ENCODE measurements at regions of chr14 and their contacts with region 1.

Region 1: DNA sequence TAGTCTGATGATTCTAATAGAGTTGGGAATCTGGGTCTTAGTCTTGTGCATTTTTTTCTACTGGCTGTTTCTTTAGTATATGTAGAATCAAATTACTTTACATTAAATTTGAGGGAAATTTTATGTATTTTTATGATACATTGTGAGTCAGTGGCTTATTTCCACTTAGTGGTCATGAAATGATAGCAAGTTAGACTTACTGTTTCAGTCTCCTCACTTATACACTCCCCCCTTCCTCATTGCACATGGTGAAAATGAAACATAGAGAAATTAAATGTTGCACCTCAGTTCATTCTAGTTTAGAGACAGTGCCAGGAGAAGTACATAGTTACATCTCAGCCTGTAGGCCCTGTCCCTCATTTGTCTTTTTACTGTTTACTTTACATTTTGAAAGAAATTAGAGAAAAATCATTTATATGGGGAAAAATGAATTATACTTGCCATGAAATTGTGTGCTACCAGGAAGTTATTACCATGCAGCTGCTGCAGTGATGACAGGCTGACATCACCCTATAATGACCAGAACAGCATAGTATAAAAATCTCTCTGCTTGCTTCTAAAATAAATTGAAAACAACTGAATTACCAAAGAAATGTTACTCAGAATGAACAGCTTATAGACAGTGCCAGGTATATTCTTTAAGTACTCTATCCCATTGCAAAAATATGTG is 113.2 kb downstream of the TRMT5 start:
- DNase-seq: no peak
- ATAC-seq: no peak
- H3K4me3 ChIP-seq: no peak overlapping the region
- H3K27ac ChIP-seq: peak overlapping the region; percentile 74
- H3K4me1 ChIP-seq: peaks cover 60% of the 10 kb centered on the region
- H3K27me3 ChIP-seq: no peaks in the 10 kb centered on the region
- CTCF ChIP-seq: no peak

Region 2: DNA sequence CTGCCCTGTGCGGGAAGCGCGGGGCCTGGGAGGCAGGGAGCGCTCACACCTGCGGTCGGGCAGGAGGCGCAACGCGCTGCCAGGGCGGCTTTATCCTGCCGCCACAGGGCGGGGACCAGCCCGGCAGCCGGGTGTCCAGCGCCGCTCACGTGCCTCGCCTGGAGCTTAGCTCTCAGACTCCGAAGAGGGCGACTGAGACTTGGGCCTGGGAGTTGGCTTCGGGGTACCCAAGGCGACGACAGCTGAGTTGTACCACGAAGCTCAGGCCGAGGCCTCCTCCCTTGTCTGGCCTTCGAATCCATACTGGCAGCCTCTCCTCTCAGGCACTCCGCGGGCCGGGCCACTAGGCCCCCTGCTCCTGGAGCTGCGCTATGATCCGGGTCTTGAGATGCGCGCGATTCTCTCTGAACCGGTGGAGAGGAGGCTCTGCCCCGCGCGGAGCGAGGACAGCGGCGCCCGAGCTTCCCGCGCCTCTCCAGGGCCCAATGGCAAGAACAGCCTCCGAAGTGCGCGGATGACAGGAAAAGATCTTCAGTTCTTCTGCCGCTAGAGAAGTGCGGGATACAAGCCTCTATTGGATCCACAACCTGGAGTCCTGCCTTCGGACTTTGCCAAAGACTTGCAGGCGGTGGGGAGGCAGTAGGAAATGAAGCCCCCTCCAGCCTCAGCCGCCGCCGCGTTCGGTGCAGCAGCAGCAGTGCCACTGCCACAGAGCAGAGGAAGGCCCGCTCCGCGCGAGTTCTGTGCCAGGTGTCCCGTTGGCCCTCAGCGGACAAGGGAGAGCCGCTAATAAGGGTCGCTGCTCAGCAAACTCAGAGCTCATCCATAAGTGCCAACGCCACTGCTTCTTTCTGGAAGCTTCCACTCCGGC is 225.1 kb before region 1 on chr14:
- intact Hi-C with region 1: loop called in 1 of 2 experiments (anchors 5 kb)
- DNase-seq: peak; percentile 39 to 81
- ATAC-seq: peak; percentile 67 to 76 (median 68)
- H3K4me3 ChIP-seq: peak overlapping the region; percentile 91
- H3K27ac ChIP-seq: peak overlapping the region; percentile 93
- H3K4me1 ChIP-seq: peaks cover 48% of the 10 kb centered on the region
- H3K27me3 ChIP-seq: no peaks in the 10 kb centered on the region
- CTCF ChIP-seq: no peak

Region 3: GRCh38 chr14:60905923-60906322 is 38.3 kb after region 1 on chr14:
- intact Hi-C with region 1: no loop called
- DNase-seq: no peak
- ATAC-seq: no peak
- H3K4me3 ChIP-seq: no peak overlapping the region
- H3K27ac ChIP-seq: no peak overlapping the region
- H3K4me1 ChIP-seq: peaks cover 8% of the 10 kb centered on the region
- H3K27me3 ChIP-seq: no peaks in the 10 kb centered on the region
- CTCF ChIP-seq: no peak

Measured in psoas muscle (tissue), 8 donors.